Mucosa of descending colon (tissue), 3 donors: ENCODE measurements at regions of chr9 and their contacts with region 1.

Region 1: GRCh38 chr9:123544007-123544827 is 188.2 kb downstream of the CRB2 start:
- DNase-seq: peak in 1 of 3 donors; percentile 66
- ATAC-seq: peak; percentile 51
- H3K4me3 ChIP-seq: no peak overlapping the region
- H3K4me1 ChIP-seq: no peaks in the 10 kb centered on the region
- CTCF ChIP-seq: peak; percentile 45

Region 2: GRCh38 chr9:124037779-124038178 is 493.6 kb after region 1 on chr9:
- intact Hi-C with region 1: loop called (anchors 10 kb)
- DNase-seq: no peak
- ATAC-seq: no peak
- H3K4me3 ChIP-seq: no peak overlapping the region
- H3K4me1 ChIP-seq: peaks cover 11% of the 10 kb centered on the region
- CTCF ChIP-seq: no peak